ENCODE measurements at regions of chrX and their contacts with region 1.

Region 1: GRCh38 chrX:39384198-39384597 is 582.9 kb downstream of the MID1IP1 start:
- DNase-seq: no peak
- H3K4me3 ChIP-seq: no peak overlapping the region
- H3K27ac ChIP-seq: no peak overlapping the region
- H3K4me1 ChIP-seq: no peaks in the 10 kb centered on the region
- H3K27me3 ChIP-seq: no peaks in the 10 kb centered on the region
- CTCF ChIP-seq: no peak

Region 2: GRCh38 chrX:38426785-38427184 is 957.4 kb before region 1 on chrX:
- CTCF ChIA-PET with region 1: no interaction called
- dilution Hi-C with region 1: no loop called
- in situ Hi-C with region 1: no loop called
- intact Hi-C with region 1: no loop called
- DNase-seq: peak; percentile 43
- H3K4me3 ChIP-seq: no peak overlapping the region
- H3K27ac ChIP-seq: no peak overlapping the region
- H3K4me1 ChIP-seq: no peaks in the 10 kb centered on the region
- H3K27me3 ChIP-seq: peaks cover 7% of the 10 kb centered on the region
- CTCF ChIP-seq: no peak

Region 3: DNA sequence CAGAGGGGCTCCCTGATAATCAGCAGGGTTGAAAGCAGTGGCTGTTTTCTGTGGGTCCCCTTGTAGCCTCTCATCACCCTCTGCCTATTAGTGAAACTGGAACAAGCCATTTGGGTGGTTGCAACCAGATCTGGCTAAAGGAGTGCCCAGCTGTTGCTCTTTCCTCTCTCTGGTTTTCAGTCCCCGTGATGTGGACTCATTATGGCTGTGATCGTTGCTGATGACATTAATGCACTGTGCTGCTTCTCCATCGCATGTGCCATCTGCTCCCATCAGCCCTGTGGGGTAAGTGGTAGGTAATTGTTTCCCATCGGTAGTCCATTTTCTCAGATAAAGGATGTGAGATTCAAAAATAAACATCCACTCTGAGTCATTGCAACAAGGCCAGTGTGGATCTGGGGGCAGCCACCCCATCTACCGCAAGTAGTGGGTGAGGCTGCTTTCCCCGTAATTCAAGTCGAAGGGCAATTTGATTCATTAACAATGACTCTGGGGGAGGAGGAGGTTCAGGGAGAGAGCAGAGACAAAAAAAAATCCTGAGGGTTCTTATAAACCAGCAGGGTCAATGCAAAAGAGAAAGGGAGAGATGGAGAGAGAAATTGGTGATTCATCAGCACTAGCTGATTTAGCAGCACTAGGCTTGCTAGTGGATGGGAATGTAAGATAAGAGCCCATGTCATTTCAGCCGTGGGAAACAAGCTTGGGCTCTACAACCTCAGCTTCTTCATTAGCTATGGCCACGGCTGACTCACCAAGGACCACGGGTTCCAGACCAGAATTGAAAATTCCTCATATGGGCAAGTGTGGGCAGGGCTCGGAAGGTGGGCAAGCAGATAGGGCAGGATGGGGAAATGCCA is 225.2 kb before region 1 on chrX:
- CTCF ChIA-PET with region 1: interaction called, 10 read pairs
- dilution Hi-C with region 1: no loop called
- in situ Hi-C with region 1: no loop called
- intact Hi-C with region 1: no loop called
- DNase-seq: peak; percentile 31
- H3K4me3 ChIP-seq: no peak overlapping the region
- H3K27ac ChIP-seq: no peak overlapping the region
- H3K4me1 ChIP-seq: no peaks in the 10 kb centered on the region
- H3K27me3 ChIP-seq: no peaks in the 10 kb centered on the region
- CTCF ChIP-seq: no peak

Region 4: GRCh38 chrX:39689376-39690104 is 305.3 kb after region 1 on chrX:
- CTCF ChIA-PET with region 1: no interaction called
- dilution Hi-C with region 1: no loop called
- in situ Hi-C with region 1: no loop called
- intact Hi-C with region 1: no loop called
- DNase-seq: no peak
- H3K4me3 ChIP-seq: peak overlapping the region in 1 of 3 experiments; percentile 29
- H3K27ac ChIP-seq: no peak overlapping the region
- H3K4me1 ChIP-seq: peaks cover 4% of the 10 kb centered on the region
- H3K27me3 ChIP-seq: peaks cover 7% of the 10 kb centered on the region
- CTCF ChIP-seq: no peak

Region 5: GRCh38 chrX:41127477-41128192 is 1743.4 kb after region 1 on chrX:
- CTCF ChIA-PET with region 1: no interaction called
- dilution Hi-C with region 1: no loop called
- in situ Hi-C with region 1: no loop called
- intact Hi-C with region 1: no loop called
- DNase-seq: no peak
- H3K4me3 ChIP-seq: no peak overlapping the region
- H3K27ac ChIP-seq: no peak overlapping the region
- H3K4me1 ChIP-seq: peaks cover 3% of the 10 kb centered on the region
- H3K27me3 ChIP-seq: no peaks in the 10 kb centered on the region
- CTCF ChIP-seq: no peak